Esophagus squamous epithelium (tissue), 5 donors: ENCODE measurements at regions of chr22 and their contacts with region 1.

Region 1: DNA sequence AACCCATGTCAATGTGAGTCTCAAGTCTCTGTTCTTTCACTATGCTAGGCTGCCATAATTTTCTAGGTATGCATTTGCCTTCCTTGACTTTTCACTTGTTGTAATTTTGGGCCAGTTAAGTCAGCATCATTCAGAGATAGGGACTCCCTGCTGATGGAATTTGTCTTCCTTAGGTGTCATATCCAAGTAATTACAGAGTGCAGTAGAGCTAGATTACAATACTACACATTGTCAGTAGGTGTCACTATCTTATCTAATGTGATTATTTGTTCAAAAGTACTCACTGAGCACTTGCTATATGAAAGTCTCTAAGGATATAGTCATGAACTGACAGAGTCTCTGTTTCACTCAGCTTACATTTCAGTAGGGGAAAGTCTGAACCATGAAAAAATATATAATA is 25.0 kb upstream of the SYN3 start:
- DNase-seq: no peak
- H3K4me3 ChIP-seq: no peak overlapping the region
- H3K27ac ChIP-seq: no peak overlapping the region
- H3K4me1 ChIP-seq: no peaks in the 10 kb centered on the region
- H3K27me3 ChIP-seq: peaks cover 0 to 23% (median 0%) of the 10 kb centered on the region in 4 donors
- CTCF ChIP-seq: peak in 1 of 6 experiments; percentile 32
- POLR2A ChIP-seq: no peak

Region 2: GRCh38 chr22:32776397-32777186 is 306.6 kb before region 1 on chr22:
- intact Hi-C with region 1: no loop called
- DNase-seq: no peak
- H3K4me3 ChIP-seq: no peak overlapping the region
- H3K27ac ChIP-seq: no peak overlapping the region
- H3K4me1 ChIP-seq: peaks cover 0 to 5% (median 0%) of the 10 kb centered on the region in 3 donors
- H3K27me3 ChIP-seq: no peaks in the 10 kb centered on the region
- CTCF ChIP-seq: no peak
- POLR2A ChIP-seq: no peak

Region 3: GRCh38 chr22:33028234-33028633 is 55.0 kb before region 1 on chr22:
- intact Hi-C with region 1: loop called (anchors 10 kb)
- DNase-seq: no peak
- H3K4me3 ChIP-seq: no peak overlapping the region
- H3K27ac ChIP-seq: no peak overlapping the region
- H3K4me1 ChIP-seq: no peaks in the 10 kb centered on the region
- H3K27me3 ChIP-seq: peaks cover 0 to 86% (median 0%) of the 10 kb centered on the region in 4 donors
- CTCF ChIP-seq: no peak
- POLR2A ChIP-seq: no peak

Region 4: GRCh38 chr22:33188326-33188725 is 105.1 kb after region 1 on chr22:
- intact Hi-C with region 1: no loop called
- DNase-seq: no peak
- H3K4me3 ChIP-seq: no peak overlapping the region
- H3K27ac ChIP-seq: no peak overlapping the region
- H3K4me1 ChIP-seq: no peaks in the 10 kb centered on the region
- H3K27me3 ChIP-seq: no peaks in the 10 kb centered on the region
- CTCF ChIP-seq: no peak
- POLR2A ChIP-seq: no peak